B cell (primary cell): ENCODE measurements at regions of chr19 and their contacts with region 1.

Region 1: DNA sequence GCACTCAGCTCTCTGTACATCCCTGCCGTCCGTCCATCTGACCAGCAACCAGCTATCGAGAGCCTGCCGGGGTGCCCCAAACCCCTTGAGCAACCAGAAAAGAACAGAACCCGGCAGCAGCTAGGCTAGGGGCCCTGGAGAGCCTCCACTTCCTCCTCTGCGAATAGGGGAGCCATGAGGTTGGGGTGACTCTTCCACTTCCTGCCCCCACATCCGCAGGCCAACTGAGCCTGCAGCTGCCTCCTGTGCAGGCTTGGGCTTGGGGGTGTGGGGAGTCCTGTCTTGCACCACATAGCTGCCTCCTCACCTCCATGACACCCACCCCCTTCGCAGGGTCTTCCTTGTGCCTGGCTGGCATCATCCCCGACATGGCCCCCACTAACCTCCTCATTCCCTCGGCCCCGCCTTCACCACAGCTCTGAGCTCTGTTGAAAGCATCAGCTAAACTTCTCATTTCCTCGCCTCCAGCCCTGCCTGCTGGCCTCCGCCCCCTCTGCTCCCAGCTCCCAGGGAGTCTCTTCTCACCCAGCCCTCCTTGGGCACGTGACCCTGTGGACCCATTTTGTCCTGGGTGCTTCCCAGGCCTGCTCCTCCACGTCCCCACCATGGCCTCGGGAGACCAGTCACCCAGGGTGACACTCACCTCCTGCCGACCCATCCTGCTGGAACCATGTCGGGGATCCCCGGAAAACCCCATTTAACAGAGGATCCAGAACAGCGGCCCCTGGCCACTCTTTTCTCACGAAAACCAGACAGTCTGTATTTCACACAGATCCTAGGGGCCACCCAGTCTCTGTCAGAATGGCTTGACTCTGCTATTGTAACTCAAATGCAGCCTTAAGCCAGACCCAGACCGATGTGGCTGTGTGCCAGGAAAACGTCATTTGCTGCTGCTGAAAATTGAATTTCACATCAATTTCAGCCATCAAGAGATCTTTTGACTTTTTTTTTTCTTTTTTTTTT is 50.4 kb downstream of the MYO9B start:
- DNase-seq: peak; percentile 86
- ATAC-seq: peak; percentile 87
- H3K4me3 ChIP-seq: peak overlapping the region; percentile 8 to 52 (median 37)
- H3K4me3 Mint-ChIP-seq: peak overlapping the region; percentile 91
- H3K27ac ChIP-seq: peak overlapping the region; percentile 84 to 86
- H3K27ac Mint-ChIP-seq: peak overlapping the region; percentile 99
- H3K4me1 ChIP-seq: peaks cover 27 to 72% of the 10 kb centered on the region in 2 donors
- H3K4me1 Mint-ChIP-seq: peaks cover 55% of the 10 kb centered on the region
- H3K27me3 ChIP-seq: no peaks in the 10 kb centered on the region
- H3K27me3 Mint-ChIP-seq: no peaks in the 10 kb centered on the region
- CTCF ChIP-seq: no peak

Region 2: DNA sequence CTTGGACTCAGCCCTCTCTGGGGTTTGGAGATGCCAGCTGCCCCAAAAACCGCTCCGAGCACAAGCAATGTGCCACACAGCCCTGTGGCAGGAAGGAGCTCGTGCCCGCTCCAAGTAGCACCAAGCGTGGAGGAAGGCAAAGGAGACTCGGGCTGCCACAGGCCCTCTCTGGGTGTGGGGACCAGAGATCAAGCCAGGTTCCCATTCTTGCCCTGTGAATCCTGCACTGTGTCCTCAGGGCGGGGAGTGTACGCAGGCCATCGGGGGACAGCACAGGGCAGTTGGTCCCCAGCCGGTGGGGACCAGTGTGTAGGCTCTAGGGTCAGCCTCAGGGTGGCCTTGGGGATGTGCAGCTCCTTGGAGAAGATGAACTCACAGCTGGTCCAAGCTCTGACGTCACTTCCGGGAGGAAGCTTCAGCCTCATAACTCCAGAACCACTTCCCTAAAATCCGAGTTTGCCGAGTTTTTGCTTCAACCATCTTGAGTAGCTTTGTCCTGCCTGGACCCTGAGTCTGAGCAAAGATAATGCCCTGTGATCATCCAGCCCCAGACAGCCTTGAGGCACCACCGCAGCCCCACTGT is 90.1 kb before region 1 on chr19:
- CTCF ChIA-PET with region 1: no interaction called
- POLR2A ChIA-PET with region 1: no interaction called
- intact Hi-C with region 1: no loop called
- DNase-seq: peak; percentile 32
- ATAC-seq: no peak
- H3K4me3 ChIP-seq: no peak overlapping the region
- H3K4me3 Mint-ChIP-seq: no peak overlapping the region
- H3K27ac ChIP-seq: no peak overlapping the region
- H3K27ac Mint-ChIP-seq: no peak overlapping the region
- H3K4me1 ChIP-seq: peaks cover 0 to 3% of the 10 kb centered on the region in 2 donors
- H3K4me1 Mint-ChIP-seq: no peaks in the 10 kb centered on the region
- H3K27me3 ChIP-seq: no peaks in the 10 kb centered on the region
- H3K27me3 Mint-ChIP-seq: peaks cover 18% of the 10 kb centered on the region
- CTCF ChIP-seq: no peak

Region 3: GRCh38 chr19:17090583-17090982 is 35.4 kb before region 1 on chr19:
- CTCF ChIA-PET with region 1: interaction called, 11 read pairs
- POLR2A ChIA-PET with region 1: interaction called, 12 read pairs
- intact Hi-C with region 1: no loop called
- DNase-seq: peak; percentile 84
- ATAC-seq: peak; percentile 73
- H3K4me3 ChIP-seq: peak overlapping the region in 1 of 5 experiments; percentile 1
- H3K4me3 Mint-ChIP-seq: peak overlapping the region; percentile 48
- H3K27ac ChIP-seq: peak overlapping the region; percentile 82 to 88
- H3K27ac Mint-ChIP-seq: peak overlapping the region; percentile 47
- H3K4me1 ChIP-seq: peaks cover 36 to 46% of the 10 kb centered on the region in 2 donors
- H3K4me1 Mint-ChIP-seq: peaks cover 57% of the 10 kb centered on the region
- H3K27me3 ChIP-seq: no peaks in the 10 kb centered on the region
- H3K27me3 Mint-ChIP-seq: no peaks in the 10 kb centered on the region
- CTCF ChIP-seq: no peak

Region 4: GRCh38 chr19:17215125-17215971 is 89.4 kb after region 1 on chr19 and contains the start of gene USE1:
- CTCF ChIA-PET with region 1: no interaction called
- POLR2A ChIA-PET with region 1: interaction called, 11 read pairs
- intact Hi-C with region 1: no loop called
- DNase-seq: peak; percentile 93
- ATAC-seq: peak; percentile 93
- H3K4me3 ChIP-seq: peak within 1 kb of the TSS; percentile 41 to 94 (median 80)
- H3K4me3 Mint-ChIP-seq: peak within 1 kb of the TSS; percentile 92
- H3K27ac ChIP-seq: peak within 1 kb of the TSS; percentile 91
- H3K27ac Mint-ChIP-seq: peak within 1 kb of the TSS; percentile 97
- H3K4me1 ChIP-seq: peaks cover 10 to 24% of the 10 kb centered on the region in 2 donors
- H3K4me1 Mint-ChIP-seq: peaks cover 19% of the 10 kb centered on the region
- H3K27me3 ChIP-seq: no peaks in the 10 kb centered on the region
- H3K27me3 Mint-ChIP-seq: no peaks in the 10 kb centered on the region
- CTCF ChIP-seq: no peak
- total RNA-seq, gene USE1: 39.9 and 49.5 TPM in 2 replicates